PC-9 (cell line): ENCODE measurements at regions of chr7 and their contacts with region 1.

Region 1: DNA sequence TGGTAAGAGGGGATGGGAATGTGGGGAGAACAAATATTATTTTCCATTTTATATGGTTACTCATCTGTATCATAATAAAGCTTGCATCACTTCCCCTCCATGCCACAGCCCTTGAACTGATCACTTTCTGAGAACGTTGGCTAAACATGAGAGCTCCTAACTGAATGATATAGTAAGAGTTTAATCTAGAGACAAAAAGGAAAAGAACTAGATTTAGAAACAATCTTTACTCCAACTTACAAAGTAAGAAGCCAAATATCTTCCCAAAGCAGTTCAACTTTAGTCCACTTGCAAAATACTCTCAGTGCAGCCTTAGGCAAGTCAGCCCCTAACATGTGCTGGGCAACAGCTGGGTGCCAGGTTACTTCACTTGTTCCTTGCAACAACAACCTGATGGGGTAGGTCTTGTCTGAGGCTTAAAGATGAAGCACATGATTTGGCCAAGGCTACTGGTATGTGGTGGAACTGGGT is 20.3 kb downstream of the SMURF1 start:
- DNase-seq: peak; percentile 68 to 87
- H3K4me3 ChIP-seq: no peak overlapping the region; the same call in 1 of the 2 replicates
- H3K27ac ChIP-seq: peak overlapping the region; percentile 92
- H3K4me1 ChIP-seq: peaks cover 60% of the 10 kb centered on the region
- H3K27me3 ChIP-seq: no peaks in the 10 kb centered on the region
- CTCF ChIP-seq: no peak

Region 2: DNA sequence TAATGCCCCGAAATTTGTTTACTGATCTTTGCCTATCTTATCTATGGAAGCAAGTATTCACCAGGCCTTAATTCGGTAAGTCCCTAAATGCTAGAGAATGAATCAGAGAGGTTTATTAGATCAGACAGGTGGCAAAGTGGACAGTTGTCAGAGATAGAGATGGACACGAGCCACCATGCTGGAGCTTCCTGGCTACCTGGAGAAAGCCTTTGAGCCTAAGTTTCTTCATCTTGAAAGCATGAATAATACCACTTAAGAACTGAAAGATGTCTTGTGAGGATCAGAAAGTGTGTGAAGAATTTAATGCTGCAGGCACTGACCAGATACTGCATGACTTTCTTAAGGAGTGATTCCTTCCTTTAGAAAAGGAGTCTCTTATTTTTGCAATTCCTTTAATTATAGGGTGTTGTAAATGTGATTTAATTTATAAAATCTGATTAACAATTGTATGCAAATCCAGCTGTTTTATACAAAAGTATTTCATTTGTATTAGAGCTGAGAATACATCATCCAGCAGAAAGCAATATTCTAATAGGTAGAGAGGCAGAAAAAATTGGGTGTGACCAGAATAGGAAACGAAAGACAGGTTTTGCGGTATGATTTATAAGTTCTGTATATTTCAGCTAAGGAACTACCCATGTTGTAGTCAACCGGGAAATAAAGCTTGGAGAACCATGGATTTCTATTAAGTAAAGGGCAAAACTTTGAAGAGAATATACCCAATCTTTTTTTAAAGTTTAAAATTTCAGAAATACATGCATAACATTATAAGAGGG is 62.4 kb before region 1 on chr7:
- CTCF ChIA-PET with region 1: no interaction called
- POLR2A ChIA-PET with region 1: interaction called, 16 read pairs
- intact Hi-C with region 1: no loop called
- DNase-seq: no peak
- H3K4me3 ChIP-seq: no peak overlapping the region
- H3K27ac ChIP-seq: peak overlapping the region; percentile 27; the same call in 1 of the 2 replicates
- H3K4me1 ChIP-seq: no peaks in the 10 kb centered on the region
- H3K27me3 ChIP-seq: no peaks in the 10 kb centered on the region
- CTCF ChIP-seq: no peak

Region 3: GRCh38 chr7:99078416-99078815 is 45.2 kb before region 1 on chr7:
- CTCF ChIA-PET with region 1: interaction called, 3 read pairs
- POLR2A ChIA-PET with region 1: interaction called, 18 read pairs
- intact Hi-C with region 1: loop called (anchors 5 kb)
- DNase-seq: no peak
- H3K4me3 ChIP-seq: no peak overlapping the region
- H3K27ac ChIP-seq: no peak overlapping the region
- H3K4me1 ChIP-seq: no peaks in the 10 kb centered on the region; the same call in 1 of the 2 replicates
- H3K27me3 ChIP-seq: no peaks in the 10 kb centered on the region
- CTCF ChIP-seq: no peak

Region 4: GRCh38 chr7:99109108-99110051 is 14.2 kb before region 1 on chr7:
- CTCF ChIA-PET with region 1: interaction called, 8 read pairs
- POLR2A ChIA-PET with region 1: interaction called, 4 read pairs
- intact Hi-C with region 1: loop called (anchors 2 kb)
- DNase-seq: peak; percentile 59 to 70
- H3K4me3 ChIP-seq: no peak overlapping the region
- H3K27ac ChIP-seq: peak overlapping the region; percentile 52
- H3K4me1 ChIP-seq: peaks cover 95% of the 10 kb centered on the region
- H3K27me3 ChIP-seq: no peaks in the 10 kb centered on the region
- CTCF ChIP-seq: no peak

Region 5: DNA sequence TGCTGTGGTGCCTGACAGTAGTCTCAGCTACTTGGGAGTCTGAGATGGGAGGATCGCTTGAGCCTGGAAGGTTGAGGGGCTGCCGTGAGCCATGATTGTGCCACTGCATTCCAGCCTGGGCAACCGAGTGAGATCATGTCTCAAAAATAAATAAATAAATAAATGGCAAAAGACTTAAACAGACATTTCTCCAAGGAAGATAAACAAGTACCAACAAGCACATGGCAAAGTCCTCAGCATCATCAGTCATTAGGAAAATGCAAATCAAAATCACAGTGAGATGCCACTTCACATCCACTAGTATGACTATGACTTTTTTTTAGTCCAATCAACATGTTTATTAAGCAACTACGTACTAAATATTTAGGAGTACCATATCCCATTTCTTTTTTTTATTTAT is 105.6 kb after region 1 on chr7:
- CTCF ChIA-PET with region 1: no interaction called
- POLR2A ChIA-PET with region 1: interaction called, 35 read pairs
- intact Hi-C with region 1: no loop called
- DNase-seq: no peak
- H3K4me3 ChIP-seq: no peak overlapping the region
- H3K27ac ChIP-seq: no peak overlapping the region
- H3K4me1 ChIP-seq: peaks cover 25% of the 10 kb centered on the region
- H3K27me3 ChIP-seq: no peaks in the 10 kb centered on the region
- CTCF ChIP-seq: no peak